ENCODE measurements at regions of chr17 and their contacts with region 1.

Region 1: DNA sequence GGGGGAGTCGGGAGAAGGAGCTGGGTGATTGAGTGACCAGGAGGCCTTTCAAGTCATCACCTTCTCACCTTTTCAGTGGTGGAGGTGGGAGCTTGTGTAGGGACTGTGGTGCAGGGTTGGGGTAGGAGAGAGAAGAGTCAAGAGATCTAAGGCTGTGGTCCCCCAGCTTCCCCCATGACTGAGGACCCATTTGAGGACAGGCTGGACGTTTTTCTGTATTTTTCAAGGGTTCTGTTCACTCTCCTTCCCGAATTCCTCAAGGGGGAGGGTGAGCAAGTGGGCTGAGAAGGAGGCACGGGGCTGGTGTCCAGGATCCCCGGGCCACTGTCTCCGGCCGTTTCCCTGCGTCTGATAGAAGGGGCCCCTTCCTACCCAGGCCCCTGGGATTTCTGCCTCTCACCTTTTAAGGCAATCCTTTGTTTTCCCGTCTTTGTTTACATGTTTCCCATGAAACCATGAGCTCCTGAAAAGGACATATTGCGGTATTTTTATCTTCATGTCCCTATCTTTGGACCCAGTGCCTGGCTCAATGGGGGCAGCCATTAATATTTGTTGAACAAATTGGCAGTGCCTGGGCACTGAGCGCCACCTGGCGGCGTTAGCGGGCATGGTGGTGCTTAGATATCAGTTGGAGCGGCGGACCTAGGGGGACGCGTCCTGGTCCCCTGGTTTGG is 9.2 kb upstream of the CD300A start:
- DNase-seq: peak; percentile 71
- ATAC-seq: no peak
- H3K4me3 ChIP-seq: peak overlapping the region in 1 of 3 experiments; percentile 37; a peak in 2 of 6 replicates
- H3K27ac ChIP-seq: no peak overlapping the region
- H3K4me1 ChIP-seq: peaks cover 34% of the 10 kb centered on the region
- H3K27me3 ChIP-seq: peaks cover 3 to 35% of the 10 kb centered on the region in 2 experiments; a peak in 4 of 5 replicates
- CTCF ChIP-seq: peak; percentile 99
- EP300 ChIP-seq: 0 out of 4 replicates have a peak, but pooled peaks of 1 of the 2 experiments have one; percentile 15
- POLR2A ChIP-seq: no peak
- RAD21 ChIP-seq: peak; percentile 99

Region 2: DNA sequence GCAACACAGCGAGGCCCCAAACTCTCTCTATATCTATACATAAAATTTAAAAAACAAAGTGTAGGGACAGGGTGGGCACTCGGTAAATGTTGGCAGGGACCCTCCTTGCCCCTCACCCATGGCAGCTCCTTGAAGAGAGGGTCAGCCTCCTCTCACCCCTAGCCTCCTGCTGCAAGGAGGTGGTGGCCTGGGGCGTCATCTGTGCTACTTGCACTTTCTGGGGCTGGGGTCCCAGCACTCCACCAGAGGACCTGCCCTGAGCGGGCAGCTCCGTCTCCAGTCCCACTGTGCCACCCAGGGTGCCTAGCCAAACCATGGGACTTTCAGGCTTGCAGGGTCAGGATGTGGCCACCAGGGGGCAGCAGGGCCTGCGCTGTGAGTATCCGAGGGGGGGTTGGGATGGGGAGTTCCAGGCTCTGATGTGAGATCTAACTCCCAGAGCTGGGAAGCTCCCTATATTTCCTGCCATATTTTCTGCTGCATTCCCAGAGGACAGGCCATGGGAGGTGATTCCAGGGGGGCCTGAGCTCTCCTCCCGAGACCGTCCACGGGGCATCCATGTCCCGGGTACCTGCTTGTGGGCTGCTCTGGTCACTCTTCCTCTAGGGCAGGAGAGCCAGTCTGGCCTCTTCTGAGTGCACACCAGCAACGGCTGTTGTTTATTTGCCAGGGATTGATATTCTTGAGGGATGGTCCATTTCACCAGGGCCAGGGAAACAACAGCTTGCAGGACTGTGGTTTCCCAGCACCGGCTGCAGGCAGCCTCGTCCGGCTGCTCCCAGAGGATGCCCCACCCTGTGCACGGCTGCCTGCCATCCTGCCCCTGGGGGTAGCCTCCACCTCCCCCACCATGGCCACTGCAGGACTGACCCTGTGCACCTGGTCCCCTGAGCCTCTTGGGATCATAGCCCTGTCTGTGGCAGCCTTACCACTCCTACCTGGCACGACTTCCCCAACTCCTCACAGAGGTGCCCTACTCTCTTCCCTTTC is 88.9 kb before region 1 on chr17:
- CTCF ChIA-PET with region 1: interaction called, 13 read pairs
- POLR2A ChIA-PET with region 1: interaction called, 29 read pairs
- in situ Hi-C with region 1: no loop called
- intact Hi-C with region 1: no loop called
- DNase-seq: peak; percentile 53
- ATAC-seq: peak; percentile 76
- H3K4me3 ChIP-seq: no peak overlapping the region
- H3K27ac ChIP-seq: no peak overlapping the region
- H3K4me1 ChIP-seq: peaks cover 3% of the 10 kb centered on the region
- H3K27me3 ChIP-seq: peaks cover 3 to 41% of the 10 kb centered on the region in 2 experiments; a peak in 4 of 5 replicates
- CTCF ChIP-seq: peak; percentile 93
- EP300 ChIP-seq: no peak
- POLR2A ChIP-seq: no peak
- RAD21 ChIP-seq: peak; percentile 89

Region 3: GRCh38 chr17:74379495-74380085 is 77.7 kb before region 1 on chr17:
- CTCF ChIA-PET with region 1: interaction called, 141 read pairs
- POLR2A ChIA-PET with region 1: interaction called, 18 read pairs
- in situ Hi-C with region 1: loop called (anchors 5 kb)
- intact Hi-C with region 1: loop called (anchors 1 kb)
- DNase-seq: peak; percentile 81
- ATAC-seq: peak; percentile 94
- H3K4me3 ChIP-seq: peak overlapping the region in 1 of 3 experiments; percentile 34; a peak in 1 of 6 replicates
- H3K27ac ChIP-seq: no peak overlapping the region
- H3K4me1 ChIP-seq: peaks cover 27% of the 10 kb centered on the region
- H3K27me3 ChIP-seq: 0 out of 5 replicates have a peak, but pooled peaks cover 0 to 12% of the 10 kb centered on the region in 2 experiments
- CTCF ChIP-seq: peak; percentile 100
- EP300 ChIP-seq: no peak
- POLR2A ChIP-seq: no peak
- RAD21 ChIP-seq: peak; percentile 100

Region 4: GRCh38 chr17:74417178-74418045 is 39.9 kb before region 1 on chr17:
- CTCF ChIA-PET with region 1: interaction called, 3 read pairs
- POLR2A ChIA-PET with region 1: interaction called, 34 read pairs
- in situ Hi-C with region 1: no loop called
- intact Hi-C with region 1: no loop called
- DNase-seq: peak; percentile 89
- ATAC-seq: peak; percentile 85
- H3K4me3 ChIP-seq: peak overlapping the region; percentile 8 to 58 (median 19); a peak in 4 of 6 replicates
- H3K27ac ChIP-seq: peak overlapping the region; percentile 12
- H3K4me1 ChIP-seq: peaks cover 84% of the 10 kb centered on the region
- H3K27me3 ChIP-seq: peaks cover 0 to 7% of the 10 kb centered on the region in 2 experiments; a peak in 1 of 5 replicates
- CTCF ChIP-seq: no peak
- EP300 ChIP-seq: no peak; a peak in 1 of 4 replicates
- POLR2A ChIP-seq: peak in 1 of 2 experiments; percentile 52; a peak in 1 of 4 replicates
- RAD21 ChIP-seq: peak; percentile 18; the same call in 1 of the 2 replicates

Region 5: GRCh38 chr17:74437702-74438101 is 19.6 kb before region 1 on chr17:
- CTCF ChIA-PET with region 1: interaction called, 34 read pairs
- POLR2A ChIA-PET with region 1: interaction called, 126 read pairs
- in situ Hi-C with region 1: no loop called
- intact Hi-C with region 1: loop called (anchors 2 kb)
- DNase-seq: no peak
- ATAC-seq: no peak
- H3K4me3 ChIP-seq: no peak overlapping the region
- H3K27ac ChIP-seq: no peak overlapping the region
- H3K4me1 ChIP-seq: peaks cover 58% of the 10 kb centered on the region
- H3K27me3 ChIP-seq: no peaks in the 10 kb centered on the region; a peak in 1 of 5 replicates
- CTCF ChIP-seq: peak; percentile 75
- EP300 ChIP-seq: no peak
- POLR2A ChIP-seq: no peak
- RAD21 ChIP-seq: peak; percentile 82

Region 6: DNA sequence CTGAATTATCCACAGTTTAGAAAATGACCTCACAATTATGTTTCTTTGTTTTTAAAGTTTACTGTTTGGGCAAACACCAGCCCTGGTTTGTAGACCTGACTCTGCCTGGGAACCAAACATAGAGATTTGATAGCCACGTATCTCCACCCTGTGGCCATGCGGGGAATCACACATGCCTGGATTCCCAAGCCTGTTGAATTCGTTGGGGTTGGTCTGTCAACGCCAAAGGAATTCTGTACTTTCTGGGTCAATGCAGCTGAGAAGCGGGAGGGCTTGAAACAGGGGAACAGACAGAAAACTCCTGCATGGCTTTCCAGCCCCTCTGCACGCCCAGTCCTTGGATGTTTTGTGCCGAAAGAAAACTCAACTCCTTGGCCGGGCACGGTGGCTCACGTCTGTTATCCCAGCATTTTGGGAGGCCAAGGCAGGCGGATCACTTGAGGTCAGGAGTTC is 36.1 kb after region 1 on chr17:
- CTCF ChIA-PET with region 1: interaction called, 12 read pairs
- POLR2A ChIA-PET with region 1: no interaction called
- in situ Hi-C with region 1: no loop called
- intact Hi-C with region 1: loop called (anchors 1 kb)
- DNase-seq: peak; percentile 71
- ATAC-seq: peak; percentile 97
- H3K4me3 ChIP-seq: no peak overlapping the region
- H3K27ac ChIP-seq: no peak overlapping the region
- H3K4me1 ChIP-seq: no peaks in the 10 kb centered on the region
- H3K27me3 ChIP-seq: peaks cover 0 to 5% of the 10 kb centered on the region in 2 experiments; a peak in 2 of 5 replicates
- CTCF ChIP-seq: peak; percentile 94
- EP300 ChIP-seq: no peak
- POLR2A ChIP-seq: no peak
- RAD21 ChIP-seq: peak; percentile 89

Measured in HepG2 (cell line).